ENCODE measurements at regions of chr19 and their contacts with region 1.

Region 1: DNA sequence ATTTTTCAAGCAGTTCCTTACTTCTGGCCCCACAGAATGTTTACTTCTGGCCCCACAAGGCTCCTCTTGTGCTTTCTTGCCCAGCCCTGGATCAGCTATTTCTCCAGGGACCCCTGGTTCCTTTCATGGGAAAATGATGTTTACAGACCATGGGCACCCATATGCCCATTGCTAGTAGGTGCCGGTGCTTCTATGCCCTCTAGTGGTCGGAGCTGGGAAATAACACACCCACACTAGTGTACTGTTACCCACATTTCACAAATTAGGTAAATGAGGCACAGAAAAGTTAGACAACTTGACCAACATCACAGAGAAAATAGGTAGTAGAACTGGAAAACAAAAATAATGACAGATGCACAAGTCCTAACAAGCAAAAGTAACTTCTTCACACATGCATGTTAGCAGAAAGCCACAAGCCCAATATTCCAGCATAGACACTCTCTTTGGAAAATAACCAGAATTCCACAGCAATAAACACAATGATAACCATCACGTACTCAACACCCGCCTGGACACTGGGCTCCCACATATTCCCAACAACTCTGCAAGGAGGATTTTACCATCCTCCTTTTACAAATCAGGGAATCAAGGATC is 1.3 kb upstream of the CEACAM6 start:
- DNase-seq: no peak
- H3K4me3 ChIP-seq: no peak overlapping the region
- CTCF ChIP-seq: peak; percentile 58

Region 2: DNA sequence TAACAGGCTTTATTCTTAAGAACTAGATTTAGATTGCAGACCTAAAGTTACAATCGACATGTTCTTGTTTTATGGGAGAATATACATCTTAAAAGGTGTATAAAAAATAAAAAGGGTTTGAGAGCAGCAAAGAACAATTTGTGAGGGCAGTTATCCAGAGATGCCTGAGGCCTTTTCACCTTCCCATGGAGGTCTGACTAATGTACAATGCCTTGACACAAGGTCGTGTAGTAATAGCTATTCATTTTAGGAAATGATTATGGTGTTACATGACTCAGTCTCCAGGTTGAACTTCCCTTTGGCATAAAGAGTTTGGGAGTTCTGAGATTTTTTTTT is 21.3 kb after region 1 on chr19:
- CTCF ChIA-PET with region 1: interaction called, 14 read pairs
- POLR2A ChIA-PET with region 1: no interaction called
- DNase-seq: no peak
- H3K4me3 ChIP-seq: no peak overlapping the region
- CTCF ChIP-seq: no peak

Region 3: GRCh38 chr19:41785653-41786052 is 31.6 kb after region 1 on chr19:
- CTCF ChIA-PET with region 1: interaction called, 28 read pairs
- POLR2A ChIA-PET with region 1: no interaction called
- DNase-seq: no peak
- H3K4me3 ChIP-seq: no peak overlapping the region
- CTCF ChIP-seq: peak; percentile 78

Region 4: GRCh38 chr19:41795031-41795461 is 41.0 kb after region 1 on chr19:
- CTCF ChIA-PET with region 1: interaction called, 28 read pairs
- POLR2A ChIA-PET with region 1: no interaction called
- DNase-seq: no peak
- H3K4me3 ChIP-seq: no peak overlapping the region
- CTCF ChIP-seq: peak; percentile 55